ENCODE measurements at regions of chr1 and their contacts with region 1.

Region 1: DNA sequence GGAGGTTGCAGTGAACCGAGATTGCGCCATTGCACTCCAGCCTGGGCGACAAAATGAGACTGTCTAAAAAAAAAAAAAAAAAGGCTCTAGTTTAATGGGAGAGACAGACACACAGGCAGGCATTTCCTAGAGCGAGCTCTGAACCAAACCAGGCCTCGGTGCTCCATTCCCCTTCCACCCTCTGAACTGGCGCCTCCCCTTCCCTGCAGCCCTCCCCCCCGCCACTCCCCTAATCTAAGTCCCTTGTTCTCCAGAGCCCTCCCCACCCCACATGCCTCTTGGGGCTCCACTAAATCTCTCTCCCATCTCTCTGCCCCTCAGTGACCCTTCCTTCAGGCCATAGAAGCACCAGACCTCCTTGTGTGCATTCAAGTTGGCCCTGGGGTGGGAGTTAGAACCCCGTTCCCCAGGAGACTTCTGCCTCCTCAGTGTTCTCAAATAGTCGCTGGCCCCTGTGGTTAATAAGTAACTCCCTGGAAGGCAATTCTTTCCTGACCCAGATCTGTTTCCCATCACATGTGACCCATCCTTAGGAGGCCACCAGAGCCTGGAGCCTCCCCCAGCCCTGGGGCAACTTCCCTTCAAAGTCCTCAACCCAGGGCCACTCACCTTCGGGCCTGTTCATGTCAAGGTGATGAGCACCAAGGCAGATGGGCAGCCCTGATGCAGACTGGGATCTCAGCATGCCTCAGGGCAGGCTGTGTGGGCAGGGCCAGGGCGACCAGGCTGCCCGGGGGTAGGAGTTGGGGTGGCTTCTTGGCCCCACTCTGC is 42.6 kb upstream of the EPB41 start:
- DNase-seq: no peak
- ATAC-seq: no peak
- H3K4me3 ChIP-seq: no peak overlapping the region
- H3K4me1 ChIP-seq: no peaks in the 10 kb centered on the region
- CTCF ChIP-seq: no peak

Region 2: GRCh38 chr1:28789412-28789811 is 82.4 kb before region 1 on chr1:
- intact Hi-C with region 1: loop called (anchors 5 to 10 kb)
- DNase-seq: no peak
- ATAC-seq: no peak
- H3K4me3 ChIP-seq: no peak overlapping the region
- H3K4me1 ChIP-seq: no peaks in the 10 kb centered on the region
- CTCF ChIP-seq: no peak

Region 3: GRCh38 chr1:29271724-29272123 is 399.9 kb after region 1 on chr1:
- intact Hi-C with region 1: no loop called
- DNase-seq: peak; percentile 83 to 91 (median 84)
- ATAC-seq: peak; percentile 98
- H3K4me3 ChIP-seq: no peak overlapping the region
- H3K4me1 ChIP-seq: peaks cover 12% of the 10 kb centered on the region
- CTCF ChIP-seq: no peak